Activated CD4-positive, alpha-beta memory T cell treated with anti-CD3 and anti-CD28 coated beads, Interleukin-2, amount 10 ng/mL, durations not matched to agents 7 days and 5 days (primary cell): ENCODE measurements at regions of chr1 and their contacts with region 1.

Region 1: GRCh38 chr1:50332941-50333594 is 90.2 kb downstream of the DMRTA2 start:
- DNase-seq: peak; percentile 52
- H3K4me3 Mint-ChIP-seq: peak overlapping the region; percentile 35
- H3K27ac Mint-ChIP-seq: no peak overlapping the region
- H3K4me1 Mint-ChIP-seq: peaks cover 9% of the 10 kb centered on the region
- H3K27me3 Mint-ChIP-seq: peaks cover 43% of the 10 kb centered on the region

Region 2: GRCh38 chr1:50237056-50237455 is 96.0 kb before region 1 on chr1:
- CTCF ChIA-PET with region 1: no interaction called
- POLR2A ChIA-PET with region 1: no interaction called
- DNase-seq: no peak
- H3K4me3 Mint-ChIP-seq: no peak overlapping the region
- H3K27ac Mint-ChIP-seq: no peak overlapping the region
- H3K4me1 Mint-ChIP-seq: no peaks in the 10 kb centered on the region
- H3K27me3 Mint-ChIP-seq: no peaks in the 10 kb centered on the region

Region 3: GRCh38 chr1:50289495-50289894 is 43.6 kb before region 1 on chr1:
- CTCF ChIA-PET with region 1: no interaction called
- POLR2A ChIA-PET with region 1: no interaction called
- DNase-seq: no peak
- H3K4me3 Mint-ChIP-seq: no peak overlapping the region
- H3K27ac Mint-ChIP-seq: no peak overlapping the region
- H3K4me1 Mint-ChIP-seq: no peaks in the 10 kb centered on the region
- H3K27me3 Mint-ChIP-seq: no peaks in the 10 kb centered on the region

Region 4: GRCh38 chr1:50346621-50347020 is 13.6 kb after region 1 on chr1:
- CTCF ChIA-PET with region 1: interaction called, 22 read pairs
- POLR2A ChIA-PET with region 1: no interaction called
- DNase-seq: no peak
- H3K4me3 Mint-ChIP-seq: no peak overlapping the region
- H3K27ac Mint-ChIP-seq: no peak overlapping the region
- H3K4me1 Mint-ChIP-seq: no peaks in the 10 kb centered on the region
- H3K27me3 Mint-ChIP-seq: peaks cover 15% of the 10 kb centered on the region